Activated T-helper 1 cell treated with anti-CD3 and anti-CD28 coated beads, Interleukin-12 subunit alpha, Interleukin-12 subunit beta, Interleukin-2, Interleukin-4 antibody, amounts not matched to agents 30 ng/mL and 10 ng/mL and 1 ng/mL, durations not matched to agents 14 hours and 24 hours and 36 hours (primary cell): ENCODE measurements at regions of chr4 and their contacts with region 1.

Region 1: GRCh38 chr4:112284662-112285411 is 867 bp downstream of the TIFA start:
- DNase-seq: no peak
- H3K4me3 Mint-ChIP-seq: peak overlapping the region; percentile 87
- H3K27ac Mint-ChIP-seq: peak overlapping the region; percentile 95
- H3K4me1 Mint-ChIP-seq: peaks cover 91% of the 10 kb centered on the region
- H3K27me3 Mint-ChIP-seq: no peaks in the 10 kb centered on the region

Region 2: GRCh38 chr4:112119353-112119783 is 165.5 kb before region 1 on chr4:
- intact Hi-C with region 1: loop called (anchors 1 kb)
- DNase-seq: peak; percentile 21
- H3K4me3 Mint-ChIP-seq: peak overlapping the region; percentile 50
- H3K27ac Mint-ChIP-seq: peak overlapping the region; percentile 94
- H3K4me1 Mint-ChIP-seq: peaks cover 24% of the 10 kb centered on the region
- H3K27me3 Mint-ChIP-seq: no peaks in the 10 kb centered on the region

Region 3: DNA sequence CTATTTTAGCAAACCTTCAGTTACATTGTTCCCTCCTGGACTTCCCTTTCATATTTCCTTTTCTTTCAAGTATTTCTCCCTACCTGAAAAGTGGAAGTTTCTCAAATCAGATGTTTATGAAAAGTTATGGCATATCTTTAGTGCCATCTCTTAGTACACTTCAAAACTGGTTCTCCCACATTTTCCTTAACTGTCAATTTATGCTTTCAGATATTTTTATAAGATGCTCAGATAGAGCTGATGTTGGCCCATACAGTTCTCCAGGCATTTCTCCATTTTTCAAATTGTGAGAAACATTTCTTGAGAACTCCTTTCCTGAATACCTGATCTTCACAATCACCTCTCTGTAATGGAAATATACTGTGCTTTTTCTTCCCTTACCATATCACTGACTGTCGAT is 85.8 kb before region 1 on chr4:
- intact Hi-C with region 1: loop called (anchors 1 kb)
- DNase-seq: no peak
- H3K4me3 Mint-ChIP-seq: no peak overlapping the region
- H3K27ac Mint-ChIP-seq: peak overlapping the region; percentile 11
- H3K4me1 Mint-ChIP-seq: peaks cover 19% of the 10 kb centered on the region
- H3K27me3 Mint-ChIP-seq: peaks cover 2% of the 10 kb centered on the region

Region 4: DNA sequence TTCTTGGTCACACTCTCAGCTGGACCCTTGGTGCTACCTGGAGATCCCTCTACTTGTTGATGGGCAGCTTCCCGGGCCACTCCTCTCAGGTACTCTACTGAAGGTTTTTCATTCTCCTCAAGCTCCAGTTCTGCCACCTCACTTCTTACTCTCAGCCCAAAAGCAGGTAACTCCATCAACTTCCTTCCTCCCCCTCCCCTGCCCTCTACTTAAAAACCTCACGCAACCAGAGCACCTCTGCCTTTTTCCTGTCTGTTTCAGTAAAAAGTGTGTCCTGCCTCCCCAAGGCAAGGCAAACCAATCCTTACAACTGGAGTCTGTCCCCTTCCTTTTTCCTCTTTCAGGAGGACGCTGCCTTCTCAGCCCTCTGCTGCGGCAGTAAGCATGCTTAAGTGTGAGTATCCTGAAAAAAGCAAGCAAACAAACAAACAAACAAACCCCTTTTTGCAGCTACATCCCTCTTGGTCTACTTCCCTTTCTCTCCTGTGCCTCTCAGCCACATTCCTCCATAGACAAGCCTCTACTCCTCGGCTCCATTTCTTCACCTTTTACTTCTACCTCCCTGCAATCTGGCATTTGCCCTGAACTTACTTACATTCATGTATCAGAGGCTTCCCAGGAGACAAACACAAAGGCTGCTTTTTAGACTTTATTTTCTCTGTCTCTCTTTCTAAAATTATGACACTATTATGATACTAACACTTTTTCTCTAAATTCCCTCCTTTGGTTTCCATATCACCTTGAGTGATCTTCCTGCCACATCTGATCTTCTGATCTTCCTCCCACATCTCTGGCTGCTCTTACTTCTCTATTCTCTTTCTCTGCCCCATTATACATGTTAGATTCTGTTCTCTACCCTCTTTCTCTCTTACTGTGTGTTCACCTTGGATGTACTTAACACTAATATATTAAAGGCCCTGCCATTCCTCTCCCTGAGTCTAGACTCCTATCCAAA is 17.8 kb after region 1 on chr4:
- intact Hi-C with region 1: loop called (anchors 1 kb)
- DNase-seq: no peak
- H3K4me3 Mint-ChIP-seq: no peak overlapping the region
- H3K27ac Mint-ChIP-seq: no peak overlapping the region
- H3K4me1 Mint-ChIP-seq: peaks cover 32% of the 10 kb centered on the region
- H3K27me3 Mint-ChIP-seq: no peaks in the 10 kb centered on the region

Region 5: GRCh38 chr4:112515304-112516067 is 230.6 kb after region 1 on chr4:
- intact Hi-C with region 1: loop called (anchors 1 kb)
- DNase-seq: peak; percentile 49
- H3K4me3 Mint-ChIP-seq: peak overlapping the region; percentile 95
- H3K27ac Mint-ChIP-seq: peak overlapping the region; percentile 93
- H3K4me1 Mint-ChIP-seq: peaks cover 79% of the 10 kb centered on the region
- H3K27me3 Mint-ChIP-seq: peaks cover 82% of the 10 kb centered on the region